ENCODE measurements at regions of chr19 and their contacts with region 1.

Region 1: GRCh38 chr19:6218491-6219162 is 61.1 kb downstream of the MLLT1 start:
- DNase-seq: peak; percentile 73 to 92
- ATAC-seq: peak; percentile 53 to 73
- H3K4me3 ChIP-seq: no peak overlapping the region
- H3K27ac ChIP-seq: peak overlapping the region in 2 of 4 donors; percentile 23 to 51
- H3K4me1 ChIP-seq: peaks cover 46 to 50% of the 10 kb centered on the region in 2 donors
- H3K27me3 ChIP-seq: no peaks in the 10 kb centered on the region
- CTCF ChIP-seq: peak; percentile 96 to 99 (median 98)
- POLR2A ChIP-seq: no peak

Region 2: GRCh38 chr19:6056801-6057650 is 161.6 kb before region 1 on chr19:
- in situ Hi-C with region 1: no loop called
- intact Hi-C with region 1: loop called (anchors 10 kb)
- DNase-seq: peak; percentile 70 to 81
- ATAC-seq: peak; percentile 95
- H3K4me3 ChIP-seq: peak overlapping the region; percentile 29 to 54 (median 47)
- H3K27ac ChIP-seq: peak overlapping the region; percentile 82 to 91 (median 87)
- H3K4me1 ChIP-seq: peaks cover 27 to 32% of the 10 kb centered on the region in 2 donors
- H3K27me3 ChIP-seq: no peaks in the 10 kb centered on the region
- CTCF ChIP-seq: no peak
- POLR2A ChIP-seq: peak in 1 of 2 donors; percentile 9

Region 3: DNA sequence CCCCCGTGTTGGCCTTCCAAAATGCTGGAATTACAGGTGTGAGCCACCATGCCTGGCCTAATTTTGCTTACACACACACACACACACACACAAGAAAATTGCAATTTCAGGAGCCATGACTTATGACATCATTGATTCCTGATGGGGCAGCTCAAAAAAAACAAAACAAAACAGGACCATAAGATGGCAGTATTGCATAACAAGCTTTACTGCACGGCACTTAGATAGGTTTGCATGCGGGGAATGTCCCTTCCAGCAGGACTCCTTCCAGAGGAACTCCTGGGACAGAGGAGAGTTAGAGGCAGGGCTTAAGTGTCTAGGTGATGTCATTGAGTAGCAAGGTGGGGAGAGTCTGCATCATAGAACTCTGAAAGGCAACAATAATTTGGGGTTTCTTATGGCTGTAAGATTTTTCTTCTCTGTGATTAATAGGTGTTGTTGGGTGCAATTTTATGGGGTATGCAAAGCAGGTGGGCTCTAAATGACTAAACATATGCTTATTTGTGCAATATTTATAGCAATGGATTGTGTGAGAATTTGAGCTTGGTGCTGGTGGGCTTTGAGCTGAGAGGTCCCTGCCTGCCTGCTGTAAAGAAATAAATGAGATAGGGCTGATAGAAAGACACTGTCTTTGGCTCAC is 92.2 kb before region 1 on chr19:
- in situ Hi-C with region 1: no loop called
- intact Hi-C with region 1: no loop called
- DNase-seq: no peak
- ATAC-seq: no peak
- H3K4me3 ChIP-seq: no peak overlapping the region
- H3K27ac ChIP-seq: no peak overlapping the region
- H3K4me1 ChIP-seq: no peaks in the 10 kb centered on the region
- H3K27me3 ChIP-seq: no peaks in the 10 kb centered on the region
- CTCF ChIP-seq: no peak
- POLR2A ChIP-seq: no peak

Region 4: DNA sequence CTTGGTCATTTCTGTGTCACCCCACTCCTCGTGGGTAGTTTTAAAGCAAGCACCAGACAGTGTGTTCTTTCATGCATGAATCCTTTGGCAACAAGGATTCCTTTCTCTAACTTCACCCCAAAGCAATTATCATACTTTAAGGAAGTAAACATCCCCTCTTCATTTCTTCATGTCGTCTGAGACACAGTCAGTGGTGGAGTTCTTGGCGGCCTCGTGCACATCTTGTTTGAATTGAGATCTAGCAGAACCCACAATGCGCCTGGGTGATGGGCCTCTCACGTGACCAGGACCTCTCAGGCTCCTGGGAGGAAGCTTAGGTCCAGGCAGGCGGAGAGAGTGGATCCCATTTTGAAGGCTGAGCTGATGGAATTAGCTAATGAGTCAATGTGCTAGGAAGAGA is 80.6 kb before region 1 on chr19:
- in situ Hi-C with region 1: no loop called
- intact Hi-C with region 1: no loop called
- DNase-seq: no peak
- ATAC-seq: no peak
- H3K4me3 ChIP-seq: no peak overlapping the region
- H3K27ac ChIP-seq: no peak overlapping the region
- H3K4me1 ChIP-seq: no peaks in the 10 kb centered on the region
- H3K27me3 ChIP-seq: no peaks in the 10 kb centered on the region
- CTCF ChIP-seq: no peak
- POLR2A ChIP-seq: no peak

Region 5: DNA sequence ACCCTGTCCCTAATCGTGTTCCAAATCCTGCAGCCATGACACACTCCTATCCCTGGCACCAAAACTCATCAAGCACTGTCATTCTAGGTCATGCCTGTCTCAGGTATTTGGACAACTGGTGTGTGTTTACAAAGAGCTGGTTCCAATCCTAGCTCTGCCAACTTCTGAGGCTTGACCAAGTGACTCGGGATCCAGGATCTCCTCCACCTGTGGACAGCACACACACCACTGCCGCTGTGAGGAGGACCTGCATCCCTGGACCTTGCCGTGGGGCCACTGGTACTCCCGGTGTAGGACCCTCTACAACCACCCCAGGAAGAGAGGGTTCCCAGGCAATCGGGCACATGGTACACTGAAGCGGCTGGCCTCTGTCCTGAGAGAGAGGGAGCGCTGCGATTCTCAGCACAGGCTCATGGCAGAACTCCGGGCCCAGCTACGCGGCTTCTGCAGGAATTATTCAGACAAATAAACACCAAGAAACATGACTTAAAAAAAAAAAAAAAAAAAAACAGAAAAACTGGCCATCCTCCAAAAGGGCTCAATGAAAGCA is 40.8 kb after region 1 on chr19:
- in situ Hi-C with region 1: no loop called
- intact Hi-C with region 1: loop called (anchors 2 kb)
- DNase-seq: peak; percentile 75 to 81
- ATAC-seq: peak; percentile 97 to 98
- H3K4me3 ChIP-seq: no peak overlapping the region
- H3K27ac ChIP-seq: peak overlapping the region; percentile 64 to 84 (median 80)
- H3K4me1 ChIP-seq: peaks cover 31 to 58% of the 10 kb centered on the region in 2 donors
- H3K27me3 ChIP-seq: no peaks in the 10 kb centered on the region
- CTCF ChIP-seq: no peak
- POLR2A ChIP-seq: no peak

Region 6: GRCh38 chr19:6297202-6297601 is 78.6 kb after region 1 on chr19:
- in situ Hi-C with region 1: loop called in 2 of 4 experiments (anchors 5 kb)
- intact Hi-C with region 1: loop called (anchors 1 kb)
- DNase-seq: no peak
- ATAC-seq: no peak
- H3K4me3 ChIP-seq: no peak overlapping the region
- H3K27ac ChIP-seq: no peak overlapping the region
- H3K4me1 ChIP-seq: no peaks in the 10 kb centered on the region
- H3K27me3 ChIP-seq: no peaks in the 10 kb centered on the region
- CTCF ChIP-seq: no peak
- POLR2A ChIP-seq: no peak

Measured in gastrocnemius medialis (tissue), 4 donors.